ENCODE measurements at regions of chr15 and their contacts with region 1.

Region 1: GRCh38 chr15:84716036-84716799 is at the start of gene SEC11A:
- DNase-seq: peak; percentile 93
- H3K4me3 Mint-ChIP-seq: peak within 1 kb of the TSS; percentile 88
- H3K27ac Mint-ChIP-seq: peak within 1 kb of the TSS; percentile 94
- H3K4me1 Mint-ChIP-seq: peaks cover 60% of the 10 kb centered on the region
- H3K27me3 Mint-ChIP-seq: no peaks in the 10 kb centered on the region

Region 2: DNA sequence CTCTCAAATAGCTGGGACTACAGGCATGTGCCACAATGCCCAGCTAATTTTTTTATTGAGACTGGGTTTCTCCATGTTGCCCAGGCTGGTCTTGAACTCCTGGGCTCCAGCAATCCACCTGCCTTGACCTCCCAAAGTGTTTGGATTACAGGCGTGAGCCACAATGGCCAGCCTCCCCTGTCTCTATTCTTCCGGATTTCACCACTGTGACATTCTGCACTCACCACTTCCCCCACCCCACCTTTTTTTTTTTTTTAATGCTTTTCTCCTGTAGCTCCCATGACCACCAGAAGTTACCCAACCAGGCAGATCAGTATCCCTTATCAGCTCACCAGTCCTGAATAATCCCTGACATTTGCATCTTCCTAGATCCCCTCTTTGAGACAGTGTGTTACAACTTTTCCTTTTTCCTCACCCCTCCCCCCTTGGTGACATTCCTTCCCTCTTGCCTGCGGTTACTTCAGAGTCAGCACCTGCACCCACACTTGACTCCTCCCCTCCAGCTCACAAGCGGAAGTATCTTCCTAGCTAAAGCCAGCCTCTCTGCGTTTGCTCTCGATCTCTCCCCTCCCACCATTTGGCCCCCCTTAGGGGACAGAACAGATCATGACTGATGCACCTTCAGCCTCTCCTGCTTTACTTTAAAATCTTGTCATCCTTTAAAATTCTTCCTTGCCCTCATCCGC is 18.7 kb after region 1 on chr15:
- CTCF ChIA-PET with region 1: interaction called, 21 read pairs
- DNase-seq: peak; percentile 86
- H3K4me3 Mint-ChIP-seq: peak overlapping the region; percentile 64
- H3K27ac Mint-ChIP-seq: peak overlapping the region; percentile 94
- H3K4me1 Mint-ChIP-seq: peaks cover 65% of the 10 kb centered on the region
- H3K27me3 Mint-ChIP-seq: no peaks in the 10 kb centered on the region

Measured in activated naive CD4-positive, alpha-beta T cell treated with anti-CD3 and anti-CD28 coated beads, Interleukin-2, amount 10 ng/mL, durations not matched to agents 7 days and 5 days (primary cell).